ENCODE measurements at regions of chr5 and their contacts with region 1.

Region 1: DNA sequence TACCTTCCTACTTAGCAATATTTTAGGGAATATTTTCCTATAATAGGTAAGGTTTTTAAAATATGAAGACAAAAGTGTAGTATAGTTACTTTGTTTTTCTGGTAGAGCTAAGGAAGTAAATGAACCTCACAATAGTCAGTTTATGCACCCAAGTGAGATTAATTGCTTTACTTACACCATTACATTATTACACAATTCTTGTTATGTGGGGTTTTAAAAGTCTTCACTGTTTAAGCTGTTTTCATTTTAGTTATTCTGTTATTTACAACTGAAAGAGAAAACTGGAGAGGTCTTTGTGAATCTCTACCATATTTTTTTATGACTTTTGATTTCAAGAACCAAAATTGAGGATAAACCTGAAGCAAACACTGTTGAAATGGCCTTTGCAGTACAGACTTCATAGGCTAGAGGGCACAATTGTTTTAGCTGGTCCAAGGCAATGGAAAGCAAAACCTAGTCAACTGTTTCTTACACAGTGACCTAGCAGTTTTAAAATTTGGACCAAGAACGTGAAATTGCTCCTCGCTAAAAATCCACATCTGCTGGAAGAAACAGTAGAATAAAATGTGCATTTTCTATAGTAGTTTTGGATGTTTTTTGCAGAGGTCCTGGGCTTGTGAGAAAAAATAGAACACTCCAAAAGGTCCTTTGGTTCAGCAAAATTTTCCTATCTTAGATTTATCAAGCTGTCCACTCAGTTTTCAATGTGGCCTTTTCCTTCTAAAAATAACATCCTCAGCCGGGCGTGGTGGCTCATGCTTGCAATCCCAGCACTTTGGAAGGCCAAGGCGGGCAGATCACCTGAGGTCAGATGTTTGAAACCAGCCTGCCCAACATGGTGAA is 66.4 kb upstream of the FER start:
- DNase-seq: peak in 6 of 9 donors; percentile 23 to 58 (median 44)
- ATAC-seq: peak; percentile 88
- H3K4me3 ChIP-seq: no peak overlapping the region
- H3K4me3 Mint-ChIP-seq: no peak overlapping the region
- H3K27ac ChIP-seq: no peak overlapping the region
- H3K27ac Mint-ChIP-seq: no peak overlapping the region
- H3K4me1 ChIP-seq: no peaks in the 10 kb centered on the region
- H3K4me1 Mint-ChIP-seq: no peaks in the 10 kb centered on the region
- H3K27me3 ChIP-seq: no peaks in the 10 kb centered on the region
- H3K27me3 Mint-ChIP-seq: peaks cover 0 to 9% (median 0%) of the 10 kb centered on the region in 5 donors

Region 2: GRCh38 chr5:108793207-108793606 is 111.9 kb after region 1 on chr5:
- CTCF ChIA-PET with region 1: no interaction called
- POLR2A ChIA-PET with region 1: no interaction called
- intact Hi-C with region 1: loop called in 1 of 2 experiments (anchors 5 kb)
- DNase-seq: no peak
- ATAC-seq: no peak
- H3K4me3 ChIP-seq: no peak overlapping the region
- H3K4me3 Mint-ChIP-seq: no peak overlapping the region
- H3K27ac ChIP-seq: no peak overlapping the region
- H3K27ac Mint-ChIP-seq: no peak overlapping the region
- H3K4me1 ChIP-seq: no peaks in the 10 kb centered on the region
- H3K4me1 Mint-ChIP-seq: peaks cover 0 to 15% (median 2%) of the 10 kb centered on the region in 7 donors
- H3K27me3 ChIP-seq: no peaks in the 10 kb centered on the region
- H3K27me3 Mint-ChIP-seq: no peaks in the 10 kb centered on the region

Region 3: GRCh38 chr5:109329333-109330237 is 648.3 kb after region 1 on chr5:
- CTCF ChIA-PET with region 1: no interaction called
- POLR2A ChIA-PET with region 1: no interaction called
- intact Hi-C with region 1: loop called in 1 of 2 experiments (anchors 10 kb)
- DNase-seq: no peak
- ATAC-seq: no peak
- H3K4me3 ChIP-seq: no peak overlapping the region
- H3K4me3 Mint-ChIP-seq: no peak overlapping the region
- H3K27ac ChIP-seq: no peak overlapping the region
- H3K27ac Mint-ChIP-seq: peak overlapping the region in 4 of 9 donors; percentile 6 to 42 (median 20)
- H3K4me1 ChIP-seq: no peaks in the 10 kb centered on the region
- H3K4me1 Mint-ChIP-seq: peaks cover 0 to 3% (median 0%) of the 10 kb centered on the region in 7 donors
- H3K27me3 ChIP-seq: no peaks in the 10 kb centered on the region
- H3K27me3 Mint-ChIP-seq: no peaks in the 10 kb centered on the region

Measured in naive thymus-derived CD4-positive, alpha-beta T cell (primary cell).